ENCODE measurements at regions of chr2 and their contacts with region 1.

Region 1: DNA sequence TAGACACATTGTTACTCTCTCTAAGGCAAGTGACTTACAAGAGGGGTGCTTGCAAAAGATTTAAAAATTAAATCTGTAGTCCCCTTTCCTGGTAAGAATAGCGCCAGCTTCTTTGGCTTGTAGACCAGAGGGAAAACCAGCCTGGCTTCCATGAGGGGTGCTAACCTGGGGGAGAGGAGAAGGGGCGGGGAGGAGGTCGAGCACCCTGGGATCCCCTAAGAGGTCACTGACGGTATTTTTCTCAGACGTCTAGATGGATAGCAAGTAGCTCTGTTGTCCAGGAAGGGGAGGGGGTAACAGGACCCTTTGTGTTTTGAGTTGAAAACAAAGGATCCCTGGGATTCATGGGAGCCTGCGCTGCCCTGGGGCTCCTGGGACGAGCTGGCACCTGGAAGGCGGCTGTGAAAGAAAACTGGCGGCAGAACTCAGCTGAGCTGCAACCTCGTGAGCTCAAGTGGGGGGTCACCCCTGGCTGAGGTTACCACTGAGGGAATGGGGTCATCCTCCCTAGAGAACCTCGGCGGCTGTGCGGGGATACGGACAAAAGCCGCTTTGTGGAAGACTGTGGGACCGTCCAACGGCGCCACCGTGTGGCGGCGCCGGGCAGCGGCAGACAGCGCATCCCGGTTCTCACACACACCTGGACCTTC is 37.8 kb upstream of the MRPL19 start:
- ATAC-seq: peak; percentile 32 to 92 (median 90)
- H3K4me3 ChIP-seq: peak overlapping the region in 3 of 5 donors; percentile 18 to 24 (median 21)
- H3K27ac ChIP-seq: no peak overlapping the region
- H3K4me1 ChIP-seq: peaks cover 7 to 9% of the 10 kb centered on the region in 2 donors

Region 2: GRCh38 chr2:74919827-74920226 is 689.0 kb before region 1 on chr2:
- in situ Hi-C with region 1: loop called in 3 of 9 experiments (anchors 25 kb)
- ATAC-seq: peak; percentile 31 to 92 (median 76)
- H3K4me3 ChIP-seq: peak overlapping the region; percentile 4 to 24 (median 18)
- H3K27ac ChIP-seq: no peak overlapping the region
- H3K4me1 ChIP-seq: no peaks in the 10 kb centered on the region

Region 3: DNA sequence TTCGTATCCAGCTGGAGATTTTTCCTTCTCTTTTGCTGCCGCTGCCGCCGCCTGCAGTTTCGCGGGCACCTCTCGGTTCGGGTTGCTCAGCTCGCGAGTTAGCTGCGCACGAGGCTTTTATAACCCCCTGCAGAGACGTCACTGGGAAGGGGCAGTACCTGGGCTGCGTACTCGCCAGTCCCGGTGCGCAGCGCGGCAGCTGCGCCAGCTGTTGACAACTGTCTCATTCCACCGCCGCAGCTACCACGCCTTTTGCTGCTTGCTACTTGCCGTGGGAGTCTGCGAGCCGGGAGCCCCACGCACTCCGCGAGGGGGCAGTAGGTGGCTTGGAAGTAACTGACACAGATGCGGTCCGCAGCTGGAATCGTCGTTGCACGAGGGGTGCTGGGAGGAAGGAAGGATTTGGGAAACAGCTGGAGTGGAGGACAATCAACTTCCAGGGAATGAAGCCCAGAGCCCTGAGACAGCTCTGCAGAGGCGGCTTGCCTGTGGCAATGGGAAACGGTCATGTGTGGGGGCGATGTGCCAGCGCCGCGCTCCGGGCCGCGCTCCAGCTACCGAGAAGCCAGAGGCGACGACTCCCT is 409.3 kb before region 1 on chr2 and contains the start of gene TACR1:
- in situ Hi-C with region 1: loop called in 1 of 9 experiments (anchors 25 kb)
- ATAC-seq: peak; percentile 69 to 88 (median 83)
- H3K4me3 ChIP-seq: peak within 1 kb of the TSS; percentile 31 to 47 (median 41)
- H3K27ac ChIP-seq: no peak within 1 kb of the TSS
- H3K4me1 ChIP-seq: no peaks in the 10 kb centered on the region
- total RNA-seq, gene TACR1: 0.25 to 6.9 (median 1.7) TPM

Region 4: GRCh38 chr2:75466708-75467311 is 142.0 kb before region 1 on chr2:
- in situ Hi-C with region 1: loop called in 5 of 9 experiments (anchors 5 to 25 kb)
- ATAC-seq: peak in 3 of 8 experiments; percentile 23 to 53 (median 41)
- H3K4me3 ChIP-seq: no peak overlapping the region
- H3K27ac ChIP-seq: no peak overlapping the region
- H3K4me1 ChIP-seq: peaks cover 4 to 9% of the 10 kb centered on the region in 2 donors

Measured in motor neuron (in vitro differentiated cells).